Posterior cingulate gyrus (tissue), 11 donors: ENCODE measurements at regions of chr7 and their contacts with region 1.

Region 1: DNA sequence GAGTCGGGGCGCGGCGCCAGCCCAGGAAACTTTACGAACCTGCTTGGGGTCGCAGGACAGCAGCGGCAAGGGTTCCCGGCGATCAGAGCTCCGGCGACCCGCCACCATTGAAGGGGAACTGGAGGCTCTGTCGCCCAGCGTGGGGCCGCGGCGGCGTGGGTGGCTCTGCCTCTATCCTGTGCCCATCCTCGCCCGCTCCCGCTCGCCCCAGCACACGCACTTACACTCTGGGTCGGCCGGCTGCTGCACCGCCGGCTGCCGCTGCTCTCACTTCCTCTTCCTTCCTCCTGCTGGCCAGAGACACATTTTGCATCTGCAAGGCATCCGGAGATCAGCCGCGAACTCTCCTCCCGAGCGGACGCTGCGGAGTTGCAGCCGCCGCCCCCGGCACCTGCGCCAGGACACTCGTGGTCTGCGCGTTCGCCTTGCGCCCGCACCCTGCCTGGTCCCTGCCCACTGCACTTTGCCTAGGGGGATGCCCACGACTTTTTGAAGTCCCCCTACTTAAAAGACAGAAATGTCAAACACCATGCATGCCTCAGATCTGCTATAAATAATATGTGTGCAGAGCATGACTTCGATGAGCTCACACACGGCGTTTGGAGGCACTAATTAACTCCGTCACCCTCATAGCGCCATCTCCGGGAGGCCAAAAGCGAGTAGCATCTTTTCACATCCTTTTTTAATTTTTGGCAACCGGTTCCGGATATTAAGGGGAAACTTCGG is at the start of gene ELMO1:
- DNase-seq: peak; percentile 40 to 93 (median 58)

Region 2: DNA sequence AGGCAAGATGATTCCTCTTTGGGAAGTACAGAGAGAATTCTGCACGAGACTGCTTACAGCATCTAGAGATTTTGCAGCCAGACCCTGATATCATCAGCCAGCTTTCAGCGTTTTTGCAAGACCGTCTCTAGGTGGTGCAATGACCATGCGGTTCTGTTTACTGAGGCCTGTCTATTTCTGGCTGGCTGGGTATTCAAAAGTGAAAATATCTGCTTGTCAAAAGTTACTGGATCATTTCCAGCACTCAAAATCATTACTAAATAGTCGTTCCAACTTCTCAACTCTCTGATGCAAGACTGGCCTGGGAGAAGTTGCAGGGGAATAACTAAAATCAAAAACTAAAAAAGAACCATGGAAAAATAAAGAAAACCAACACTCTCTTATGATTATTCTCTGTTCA is 240.3 kb before region 1 on chr7:
- intact Hi-C with region 1: loop called (anchors 5 kb)
- DNase-seq: peak in 7 of 10 donors; percentile 50 to 93 (median 69)

Region 3: DNA sequence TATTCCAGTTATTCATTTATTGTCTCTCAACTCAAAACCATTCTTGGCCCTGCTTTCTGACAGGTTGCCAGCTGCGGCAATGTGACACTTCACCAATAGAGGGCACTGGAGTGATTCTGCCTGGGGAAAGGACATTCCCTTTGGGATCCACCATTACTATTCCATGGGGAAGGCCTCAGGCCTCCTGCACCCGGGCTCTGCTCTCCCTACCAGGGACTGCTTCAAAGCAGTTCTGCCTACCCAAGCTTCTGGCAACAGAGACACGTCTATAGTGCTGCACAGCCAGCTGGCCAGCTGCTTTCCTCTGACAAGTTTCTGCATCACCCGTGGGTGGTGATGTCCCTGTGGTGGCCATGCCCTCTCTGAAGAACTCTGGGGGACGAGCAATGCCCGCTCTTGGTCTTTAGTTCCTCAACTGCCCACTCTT is 164.0 kb before region 1 on chr7:
- intact Hi-C with region 1: loop called (anchors 2 kb)
- DNase-seq: peak; percentile 39 to 95 (median 72)

Region 4: DNA sequence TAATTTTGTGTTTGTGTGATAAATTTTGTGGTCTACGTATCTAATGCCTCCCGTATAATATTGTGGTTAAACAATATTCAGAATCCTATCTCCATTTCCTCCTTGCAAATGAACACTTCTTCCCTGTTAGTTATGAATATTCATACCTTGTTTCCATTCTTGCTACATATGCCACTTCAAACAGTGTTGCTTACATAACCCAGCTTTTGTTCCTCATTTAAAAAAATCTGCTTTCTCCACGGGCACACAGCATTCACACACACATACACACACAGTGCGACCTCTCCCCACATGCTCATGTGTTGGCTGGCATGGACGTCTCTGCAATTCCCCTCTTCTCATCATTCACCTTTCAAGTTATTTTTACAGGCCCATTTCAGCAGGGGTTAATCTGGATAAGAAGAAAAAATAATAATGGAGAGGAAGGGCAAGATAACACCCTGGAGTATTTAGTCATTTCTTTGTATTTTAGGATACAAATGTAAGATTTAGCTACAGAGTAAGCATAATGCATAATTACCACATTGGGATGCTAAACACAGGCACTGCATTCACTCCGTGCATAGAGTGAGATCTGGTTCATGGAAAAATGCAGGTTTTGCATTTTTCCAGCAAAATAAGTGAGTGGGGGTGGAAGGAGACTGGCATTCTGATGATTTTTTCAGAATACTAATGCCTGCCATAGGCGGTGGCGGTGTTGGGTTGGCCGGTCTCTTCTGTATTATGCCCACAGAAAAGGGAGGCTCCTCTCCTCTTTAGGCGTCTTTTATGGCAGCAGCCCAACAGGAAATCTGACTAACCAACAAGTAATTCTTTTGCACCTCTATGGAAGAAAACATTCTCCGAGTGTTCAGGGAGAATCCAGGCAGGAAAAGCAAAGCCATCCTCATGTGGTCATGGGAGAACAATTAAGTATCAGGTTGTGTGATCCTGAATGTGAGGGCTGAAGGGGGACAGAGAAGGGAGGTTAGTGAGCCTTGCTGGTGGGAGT is 31.5 kb after region 1 on chr7:
- intact Hi-C with region 1: loop called (anchors 5 kb)
- DNase-seq: peak in 2 of 10 donors; percentile 16 to 32

Region 5: DNA sequence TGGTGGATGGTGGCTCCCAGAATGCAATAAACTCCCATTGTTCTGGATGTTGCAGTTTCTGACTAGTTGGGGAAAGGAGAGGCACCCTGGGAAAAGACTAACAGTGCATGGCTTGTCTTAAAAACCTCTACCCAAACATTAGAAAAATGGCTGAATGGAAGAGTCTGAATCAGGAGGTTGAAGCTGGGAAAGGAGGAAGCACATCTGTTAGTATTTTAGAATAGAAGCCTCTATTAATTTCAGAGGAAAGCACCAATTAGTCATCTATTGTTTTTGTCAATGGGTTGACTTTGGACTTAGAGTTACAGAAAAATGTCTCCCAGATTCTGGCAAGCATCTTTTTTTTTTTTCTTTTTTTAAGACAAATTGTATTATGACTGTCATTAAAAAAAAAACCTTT is 56.0 kb after region 1 on chr7:
- intact Hi-C with region 1: loop called (anchors 5 kb)
- DNase-seq: no peak